ENCODE measurements at regions of chr7 and their contacts with region 1.

Region 1: DNA sequence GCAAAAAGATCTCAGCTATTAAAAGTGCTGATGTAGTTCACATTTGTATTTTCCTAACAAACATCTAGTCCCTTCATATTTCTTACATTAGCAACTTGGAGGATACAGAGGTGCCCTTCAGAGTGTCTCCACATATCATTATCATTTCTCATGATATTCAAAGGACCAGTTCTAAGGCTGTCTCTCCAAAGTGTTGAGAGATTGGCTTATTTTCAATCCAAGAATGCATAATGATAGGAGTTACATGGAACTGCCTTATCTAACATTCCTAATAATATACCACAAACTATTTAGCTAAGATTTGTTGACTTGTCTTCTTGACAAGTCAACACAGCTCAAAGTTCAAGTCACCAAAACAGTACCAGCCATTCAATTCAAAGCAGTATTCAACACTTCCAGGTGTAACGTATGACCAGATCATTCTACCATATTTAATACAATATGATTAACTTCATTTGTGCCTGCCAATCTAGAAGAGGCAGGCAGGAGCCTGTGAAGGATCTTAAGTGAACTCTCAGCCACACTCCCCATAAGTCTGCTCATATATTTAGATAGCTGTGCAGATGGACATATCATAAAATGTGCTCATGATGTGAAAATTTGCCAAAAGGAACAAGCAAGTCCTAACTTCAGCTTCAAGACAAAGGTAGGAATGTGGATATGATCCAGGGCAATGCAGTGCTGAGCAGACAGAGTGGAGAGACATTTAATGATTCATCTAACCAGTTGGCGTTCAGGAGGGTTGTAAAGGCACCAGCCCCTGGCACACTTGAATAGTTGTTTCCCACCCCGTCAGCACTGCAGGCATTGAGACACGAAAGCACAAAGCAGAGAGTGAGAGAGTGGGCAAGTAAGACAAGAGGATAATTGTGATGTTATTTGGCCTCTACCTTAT is 108.3 kb downstream of the MTERF1 start:
- DNase-seq: no peak
- ATAC-seq: peak; percentile 38 to 81 (median 56)
- H3K4me3 ChIP-seq: no peak overlapping the region
- H3K27ac ChIP-seq: peak overlapping the region in 6 of 12 donors; percentile 6 to 41 (median 26)
- H3K4me1 ChIP-seq: peaks cover 0 to 18% (median 3%) of the 10 kb centered on the region in 12 donors
- H3K27me3 ChIP-seq: no peaks in the 10 kb centered on the region
- CTCF ChIP-seq: no peak
- POLR2A ChIP-seq: no peak

Region 2: GRCh38 chr7:91683823-91684222 is 88.3 kb before region 1 on chr7:
- intact Hi-C with region 1: loop called in 1 of 10 experiments (anchors 10 kb)
- DNase-seq: peak in 3 of 5 donors; percentile 27 to 32 (median 29)
- ATAC-seq: peak; percentile 74 to 94 (median 83)
- H3K4me3 ChIP-seq: no peak overlapping the region
- H3K27ac ChIP-seq: no peak overlapping the region
- H3K4me1 ChIP-seq: peaks cover 0 to 10% (median 0%) of the 10 kb centered on the region in 12 donors
- H3K27me3 ChIP-seq: no peaks in the 10 kb centered on the region
- CTCF ChIP-seq: no peak
- POLR2A ChIP-seq: no peak

Region 3: GRCh38 chr7:91814189-91814588 is 42.0 kb after region 1 on chr7:
- intact Hi-C with region 1: no loop called
- DNase-seq: no peak
- ATAC-seq: no peak
- H3K4me3 ChIP-seq: no peak overlapping the region
- H3K27ac ChIP-seq: no peak overlapping the region
- H3K4me1 ChIP-seq: peaks cover 0 to 17% (median 0%) of the 10 kb centered on the region in 12 donors
- H3K27me3 ChIP-seq: no peaks in the 10 kb centered on the region
- CTCF ChIP-seq: no peak
- POLR2A ChIP-seq: no peak